Spleen (tissue), 13 donors: ENCODE measurements at regions of chr19 and their contacts with region 1.

Region 1: GRCh38 chr19:54738715-54739114 is 402 bp downstream of the KIR2DL3 start:
- DNase-seq: no peak
- H3K4me3 ChIP-seq: no peak overlapping the region
- H3K27ac ChIP-seq: no peak overlapping the region
- H3K4me1 ChIP-seq: no peaks in the 10 kb centered on the region
- H3K27me3 ChIP-seq: no peaks in the 10 kb centered on the region
- CTCF ChIP-seq: no peak
- POLR2A ChIP-seq: no peak

Region 2: DNA sequence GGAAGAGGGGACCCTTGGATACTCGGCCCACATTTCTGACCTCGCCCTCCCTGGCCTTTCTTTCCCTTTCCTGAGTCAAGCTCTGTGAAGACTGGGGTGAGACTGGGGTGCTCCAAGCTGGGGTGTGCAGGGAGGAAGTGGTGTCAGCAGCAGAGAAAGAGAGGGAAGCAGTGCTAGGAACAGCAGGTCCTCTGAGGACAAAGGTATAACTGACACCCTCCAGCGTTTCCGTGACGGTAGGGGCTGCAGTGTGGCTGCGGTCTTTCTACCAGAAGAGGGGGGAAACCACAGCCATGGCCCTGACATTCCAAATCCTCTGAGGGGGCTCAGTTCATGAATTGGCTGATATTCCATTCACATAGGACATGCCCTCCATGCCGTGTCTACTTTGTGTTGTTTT is 112.6 kb after region 1 on chr19:
- intact Hi-C with region 1: loop called (anchors 2 kb)
- DNase-seq: no peak
- H3K4me3 ChIP-seq: no peak overlapping the region
- H3K27ac ChIP-seq: peak overlapping the region in 1 of 8 donors; percentile 14
- H3K4me1 ChIP-seq: peaks cover 0 to 6% (median 0%) of the 10 kb centered on the region in 6 donors
- H3K27me3 ChIP-seq: peaks cover 0 to 4% (median 0%) of the 10 kb centered on the region in 7 donors
- CTCF ChIP-seq: no peak
- POLR2A ChIP-seq: no peak